Posterior vena cava (tissue), 2 donors: ENCODE measurements at regions of chr11 and their contacts with region 1.

Region 1: DNA sequence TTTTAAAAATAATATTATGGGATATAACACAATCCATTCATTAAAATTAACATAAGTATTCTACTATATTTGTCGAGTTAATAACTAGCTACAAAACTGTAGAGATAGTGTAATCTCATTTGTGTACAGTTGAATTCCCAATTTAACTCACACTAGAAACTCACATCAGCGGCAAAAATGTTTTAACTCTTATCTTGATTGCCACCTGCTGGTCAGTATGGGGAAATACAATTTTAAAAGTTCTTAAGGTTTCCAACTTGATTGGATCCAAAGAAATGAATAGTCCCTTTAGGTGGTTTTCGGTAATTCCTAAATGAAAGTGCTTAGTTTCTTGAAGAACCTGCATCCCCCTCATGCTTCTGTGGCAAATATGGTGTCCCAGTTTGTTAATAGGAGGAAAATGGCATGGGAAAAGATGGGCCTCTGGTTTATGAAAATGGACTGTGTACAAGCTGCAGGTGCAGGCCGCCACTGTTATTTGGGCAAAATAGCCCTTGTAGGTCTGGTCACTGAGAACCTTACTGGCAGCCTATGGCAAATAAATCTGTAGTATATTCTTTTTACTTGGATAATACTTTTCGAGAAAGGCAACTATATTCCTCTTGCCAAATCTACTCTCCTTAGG is 33.7 kb upstream of the SLC17A6 start:
- DNase-seq: no peak

Region 2: GRCh38 chr11:22177186-22177585 is 127.3 kb before region 1 on chr11:
- intact Hi-C with region 1: loop called in 1 of 2 experiments (anchors 5 kb)
- DNase-seq: no peak